Activated T-helper 1 cell treated with anti-CD3 and anti-CD28 coated beads, Interleukin-12 subunit alpha, Interleukin-12 subunit beta, Interleukin-2, Interleukin-4 antibody, amounts not matched to agents 30 ng/mL and 10 ng/mL and 1 ng/mL, durations not matched to agents 14 hours and 24 hours and 36 hours (primary cell): ENCODE measurements at regions of chr6 and their contacts with region 1.

Region 1: DNA sequence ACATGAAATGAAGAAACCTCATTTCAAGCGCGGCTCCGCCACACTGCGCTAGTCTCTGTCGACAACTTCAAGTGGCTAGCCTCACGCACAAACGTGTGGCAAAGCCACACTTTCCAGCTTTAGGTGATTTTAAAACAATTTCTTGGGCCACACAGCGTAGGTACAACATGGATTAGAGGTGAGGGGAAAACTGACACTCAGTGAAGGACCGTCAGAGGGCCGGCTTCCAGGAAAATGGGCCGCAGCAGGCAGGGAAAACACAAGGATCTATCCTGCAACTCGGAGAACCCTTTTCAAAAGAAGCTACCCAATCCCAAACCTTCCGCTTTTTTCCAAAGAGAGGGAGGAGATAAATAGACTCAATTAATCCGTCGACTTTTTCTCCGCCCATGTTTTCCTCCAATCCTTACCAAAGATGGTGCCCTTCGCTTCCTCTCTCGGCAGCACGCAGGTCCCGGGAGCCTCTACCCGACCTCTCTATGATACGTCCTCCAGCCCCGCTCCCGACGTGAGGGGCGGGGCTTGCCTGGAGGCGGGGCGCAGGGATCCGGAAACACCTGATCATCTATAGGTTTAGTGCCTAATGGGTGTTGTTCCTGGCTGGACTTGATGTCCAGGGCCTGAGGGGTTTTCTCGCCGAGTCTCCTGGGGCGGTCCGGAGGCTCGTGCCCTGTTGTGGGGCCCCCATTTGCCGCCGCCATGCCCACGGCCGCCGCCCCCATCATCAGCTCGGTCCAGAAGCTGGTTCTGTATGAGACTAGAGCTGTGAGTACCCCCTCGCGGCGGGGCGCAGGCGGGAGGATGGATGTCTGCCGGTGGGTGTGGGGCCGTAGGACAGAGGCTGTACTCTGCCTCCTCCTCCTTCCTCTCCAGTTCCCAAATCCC is at the starts of genes AK9 and FIG4:
- DNase-seq: peak; percentile 85
- H3K4me3 Mint-ChIP-seq: peak within 1 kb of the TSS; percentile 87
- H3K27ac Mint-ChIP-seq: peak within 1 kb of the TSS; percentile 84
- H3K4me1 Mint-ChIP-seq: peaks cover 47% of the 10 kb centered on the region
- H3K27me3 Mint-ChIP-seq: peaks cover 13% of the 10 kb centered on the region
- total RNA-seq, gene AK9: 2.8 and 3.8 TPM in 2 replicates
- total RNA-seq, gene FIG4: 7.5 and 8.1 TPM in 2 replicates

Region 2: DNA sequence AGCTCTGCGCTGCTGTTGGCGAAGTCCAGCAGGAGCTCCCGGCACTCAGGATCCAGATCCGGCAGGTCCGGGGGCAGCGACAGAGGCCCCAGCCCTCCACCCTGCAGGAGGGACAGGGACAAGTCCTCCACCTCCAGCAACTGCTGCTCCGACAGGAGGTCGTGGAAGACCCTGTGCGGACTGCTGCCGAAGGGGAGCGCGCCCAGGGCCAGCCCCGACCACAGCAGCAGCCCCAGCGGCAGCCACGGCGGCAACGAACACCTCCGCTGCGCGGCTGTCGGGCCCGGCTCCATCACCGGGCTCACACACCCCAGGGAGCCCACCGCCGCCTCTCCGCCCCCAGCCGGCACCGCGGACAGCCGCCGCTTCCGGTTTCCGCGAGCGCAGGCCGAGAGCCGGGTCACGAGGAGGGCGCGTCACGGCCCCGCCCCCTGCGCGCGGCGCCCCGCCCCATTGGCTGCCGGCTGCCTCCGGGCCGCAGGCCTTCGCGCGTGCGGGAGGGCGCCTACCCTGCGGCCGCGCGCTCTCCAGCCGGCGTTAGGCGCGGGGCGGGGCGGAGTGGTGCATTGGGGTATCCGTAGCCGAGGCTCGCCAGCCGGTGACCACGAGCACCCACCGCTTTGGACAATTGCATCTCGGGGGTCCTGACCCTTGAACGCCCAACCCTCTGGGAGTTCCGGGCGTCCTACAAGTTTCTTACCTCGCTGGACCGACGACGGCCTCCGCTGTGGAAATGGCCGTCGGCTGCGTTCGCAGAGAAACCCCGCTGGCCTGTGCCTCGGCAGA is 1616.4 kb before region 1 on chr6 and contains the start of gene OSTM1:
- intact Hi-C with region 1: loop called (anchors 10 kb)
- DNase-seq: peak; percentile 92
- H3K4me3 Mint-ChIP-seq: peak within 1 kb of the TSS; percentile 85
- H3K27ac Mint-ChIP-seq: peak within 1 kb of the TSS; percentile 80
- H3K4me1 Mint-ChIP-seq: peaks cover 12% of the 10 kb centered on the region
- H3K27me3 Mint-ChIP-seq: peaks cover 25% of the 10 kb centered on the region
- total RNA-seq, gene OSTM1: 19.9 and 22.5 TPM in 2 replicates

Region 3: GRCh38 chr6:109187399-109188114 is 503.4 kb before region 1 on chr6:
- intact Hi-C with region 1: loop called (anchors 2 kb)
- DNase-seq: peak; percentile 25
- H3K4me3 Mint-ChIP-seq: no peak overlapping the region
- H3K27ac Mint-ChIP-seq: no peak overlapping the region
- H3K4me1 Mint-ChIP-seq: no peaks in the 10 kb centered on the region
- H3K27me3 Mint-ChIP-seq: peaks cover 39% of the 10 kb centered on the region

Region 4: GRCh38 chr6:109389650-109390274 is 301.2 kb before region 1 on chr6:
- intact Hi-C with region 1: no loop called
- DNase-seq: no peak
- H3K4me3 Mint-ChIP-seq: no peak overlapping the region
- H3K27ac Mint-ChIP-seq: no peak overlapping the region
- H3K4me1 Mint-ChIP-seq: peaks cover 9% of the 10 kb centered on the region
- H3K27me3 Mint-ChIP-seq: peaks cover 9% of the 10 kb centered on the region

Region 5: GRCh38 chr6:109482905-109483735 is 207.9 kb before region 1 on chr6 and contains the start of gene ZBTB24:
- intact Hi-C with region 1: loop called (anchors 1 kb)
- DNase-seq: peak; percentile 87
- H3K4me3 Mint-ChIP-seq: peak within 1 kb of the TSS; percentile 98
- H3K27ac Mint-ChIP-seq: peak within 1 kb of the TSS; percentile 92
- H3K4me1 Mint-ChIP-seq: peaks cover 47% of the 10 kb centered on the region
- H3K27me3 Mint-ChIP-seq: peaks cover 1% of the 10 kb centered on the region
- total RNA-seq, gene ZBTB24: 19.5 and 20.8 TPM in 2 replicates

Region 6: DNA sequence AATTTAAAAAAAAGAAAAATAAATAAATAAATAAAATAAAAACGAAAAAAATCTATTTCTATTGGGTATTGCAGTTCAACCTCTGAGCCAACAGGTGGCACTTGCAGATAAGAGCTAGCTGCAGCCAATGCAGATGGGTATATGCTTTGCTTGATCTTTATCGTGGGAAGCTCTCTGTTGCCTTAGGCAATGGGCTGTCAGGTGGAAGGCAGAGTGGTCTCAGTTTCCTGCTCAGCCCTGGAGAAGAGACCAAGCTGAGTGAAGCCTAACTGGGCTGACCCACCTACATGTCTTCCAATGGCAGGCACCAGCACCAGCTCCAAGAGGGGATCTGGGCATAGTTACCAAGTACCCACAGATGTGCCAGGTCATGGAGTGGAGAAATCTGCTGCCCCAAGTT is 95.0 kb before region 1 on chr6:
- intact Hi-C with region 1: loop called (anchors 1 kb)
- DNase-seq: no peak
- H3K4me3 Mint-ChIP-seq: no peak overlapping the region
- H3K27ac Mint-ChIP-seq: no peak overlapping the region
- H3K4me1 Mint-ChIP-seq: no peaks in the 10 kb centered on the region
- H3K27me3 Mint-ChIP-seq: no peaks in the 10 kb centered on the region

Region 7: GRCh38 chr6:109705258-109705657 is 14.3 kb after region 1 on chr6:
- intact Hi-C with region 1: loop called (anchors 1 kb)
- DNase-seq: peak; percentile 53
- H3K4me3 Mint-ChIP-seq: no peak overlapping the region
- H3K27ac Mint-ChIP-seq: no peak overlapping the region
- H3K4me1 Mint-ChIP-seq: peaks cover 5% of the 10 kb centered on the region
- H3K27me3 Mint-ChIP-seq: no peaks in the 10 kb centered on the region

Region 8: DNA sequence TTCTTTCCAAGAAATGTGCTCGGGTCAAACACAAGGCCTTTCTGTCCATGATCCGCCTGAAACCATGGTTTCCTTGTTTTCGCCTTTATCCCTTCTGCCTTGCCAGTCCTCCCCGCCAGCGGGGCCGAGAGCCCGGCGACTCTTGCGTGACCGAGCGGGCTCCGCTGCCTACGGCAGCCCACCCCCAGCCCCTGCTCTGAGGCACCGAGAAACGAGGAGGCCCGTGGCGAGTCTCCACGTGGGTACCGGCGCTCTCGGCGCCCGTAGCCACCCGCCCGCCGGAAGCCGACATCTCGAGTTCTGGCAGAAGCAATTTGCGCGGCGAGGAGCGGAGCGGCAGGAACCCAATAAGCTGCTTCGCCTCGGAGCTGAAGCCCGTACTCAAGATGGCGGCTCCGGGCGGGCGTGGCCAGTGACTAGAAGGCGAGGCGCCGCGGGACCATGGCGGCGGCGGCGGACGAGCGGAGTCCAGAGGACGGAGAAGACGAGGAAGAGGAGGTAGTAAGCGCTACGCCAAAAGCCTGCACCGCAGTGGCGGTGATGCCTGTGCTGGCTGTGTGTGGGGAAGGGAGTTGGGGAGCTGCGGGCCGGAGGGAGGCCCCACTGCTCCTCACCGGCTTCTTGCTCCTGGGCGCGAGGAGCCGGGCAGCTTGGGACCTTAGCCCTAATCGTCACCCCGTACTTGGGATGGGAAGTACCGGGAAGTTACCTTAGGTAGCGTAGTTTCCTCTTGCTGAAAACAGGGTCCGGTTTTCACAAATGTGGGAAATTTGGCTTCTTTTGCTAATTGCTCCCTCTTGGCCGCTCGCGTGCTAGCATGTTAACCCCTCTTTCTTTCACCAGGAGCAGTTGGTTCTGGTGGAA is 1267.6 kb after region 1 on chr6 and contains the start of gene GTF3C6:
- intact Hi-C with region 1: loop called (anchors 2 kb)
- DNase-seq: peak; percentile 93
- H3K4me3 Mint-ChIP-seq: peak within 1 kb of the TSS; percentile 100
- H3K27ac Mint-ChIP-seq: peak within 1 kb of the TSS; percentile 99
- H3K4me1 Mint-ChIP-seq: peaks cover 16% of the 10 kb centered on the region
- H3K27me3 Mint-ChIP-seq: peaks cover 2% of the 10 kb centered on the region
- total RNA-seq, gene GTF3C6: 137 TPM in 2 replicates